ENCODE measurements at regions of chr5 and their contacts with region 1.

Region 1: GRCh38 chr5:161201558-161201957 is 345.0 kb downstream of the GABRB2 start:
- DNase-seq: no peak
- ATAC-seq: no peak
- H3K4me3 ChIP-seq: no peak overlapping the region
- H3K27ac ChIP-seq: no peak overlapping the region
- H3K4me1 ChIP-seq: no peaks in the 10 kb centered on the region
- H3K27me3 ChIP-seq: peaks cover 0 to 2% (median 0%) of the 10 kb centered on the region in 7 donors
- CTCF ChIP-seq: no peak

Region 2: GRCh38 chr5:161230221-161230620 is 28.7 kb after region 1 on chr5:
- intact Hi-C with region 1: loop called in 1 of 10 experiments (anchors 2 kb)
- DNase-seq: no peak
- ATAC-seq: peak in 2 of 8 donors; percentile 50 to 64
- H3K4me3 ChIP-seq: no peak overlapping the region
- H3K27ac ChIP-seq: no peak overlapping the region
- H3K4me1 ChIP-seq: peaks cover 0 to 4% (median 0%) of the 10 kb centered on the region in 9 donors
- H3K27me3 ChIP-seq: no peaks in the 10 kb centered on the region
- CTCF ChIP-seq: no peak

Region 3: GRCh38 chr5:161580621-161581020 is 379.1 kb after region 1 on chr5:
- intact Hi-C with region 1: no loop called
- DNase-seq: no peak
- ATAC-seq: no peak
- H3K4me3 ChIP-seq: no peak overlapping the region
- H3K27ac ChIP-seq: no peak overlapping the region
- H3K4me1 ChIP-seq: no peaks in the 10 kb centered on the region
- H3K27me3 ChIP-seq: peaks cover 0 to 4% (median 0%) of the 10 kb centered on the region in 7 donors
- CTCF ChIP-seq: no peak

Measured in heart right ventricle (tissue), 16 donors.